Activated CD4-positive, alpha-beta T cell treated with anti-CD3 and anti-CD28 coated beads, Interleukin-2, amount 10 ng/mL, durations not matched to agents 24 days and 14 days (primary cell): ENCODE measurements at regions of chr11 and their contacts with region 1.

Region 1: GRCh38 chr11:70202898-70203748 is at the start of gene FADD:
- DNase-seq: peak; percentile 97
- H3K4me3 Mint-ChIP-seq: peak within 1 kb of the TSS; percentile 93
- H3K27ac Mint-ChIP-seq: peak within 1 kb of the TSS; percentile 96
- H3K4me1 Mint-ChIP-seq: peaks cover 27% of the 10 kb centered on the region
- H3K27me3 Mint-ChIP-seq: peaks cover 2% of the 10 kb centered on the region
- total RNA-seq, gene FADD: 42.9 and 44.4 TPM in 2 replicates

Region 2: DNA sequence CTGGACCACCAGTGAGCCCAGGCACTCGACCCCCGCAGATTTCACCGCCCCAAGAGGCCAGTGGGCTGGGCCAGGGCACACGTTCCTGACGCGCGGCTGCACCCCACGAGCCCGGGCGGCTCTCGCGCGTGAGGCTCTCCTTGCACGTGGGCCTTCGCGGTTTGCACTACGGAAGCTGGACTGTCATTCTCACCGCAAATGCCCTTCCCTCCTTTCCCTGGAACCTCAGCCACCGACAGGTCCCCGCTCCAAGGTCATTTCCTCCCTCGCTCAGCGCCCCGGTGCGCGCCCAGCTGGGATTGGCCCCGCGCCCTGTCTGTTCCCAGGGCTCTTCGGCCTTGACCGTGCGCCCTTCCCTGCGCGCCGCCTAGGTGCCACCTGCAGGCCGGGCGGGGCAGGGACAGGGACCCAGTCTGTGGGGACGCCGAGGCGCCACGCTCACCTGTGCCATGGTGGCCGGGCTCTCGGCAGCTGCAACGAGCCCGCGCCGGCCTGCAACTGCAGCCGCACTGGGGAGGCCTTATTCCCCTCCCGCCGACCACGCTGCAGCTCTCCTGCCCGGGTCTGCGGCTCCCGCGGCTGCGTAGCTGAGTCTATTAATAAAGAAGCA is 1359.3 kb before region 1 on chr11:
- intact Hi-C with region 1: loop called (anchors 5 kb)
- DNase-seq: peak; percentile 90
- H3K4me3 Mint-ChIP-seq: peak overlapping the region; percentile 81
- H3K27ac Mint-ChIP-seq: peak overlapping the region; percentile 81
- H3K4me1 Mint-ChIP-seq: peaks cover 30% of the 10 kb centered on the region
- H3K27me3 Mint-ChIP-seq: peaks cover 15% of the 10 kb centered on the region

Region 3: GRCh38 chr11:69675811-69676371 is 527.2 kb before region 1 on chr11:
- intact Hi-C with region 1: loop called (anchors 1 kb)
- DNase-seq: no peak
- H3K4me3 Mint-ChIP-seq: peak overlapping the region; percentile 96
- H3K27ac Mint-ChIP-seq: peak overlapping the region; percentile 92
- H3K4me1 Mint-ChIP-seq: peaks cover 17% of the 10 kb centered on the region
- H3K27me3 Mint-ChIP-seq: peaks cover 8% of the 10 kb centered on the region

Region 4: DNA sequence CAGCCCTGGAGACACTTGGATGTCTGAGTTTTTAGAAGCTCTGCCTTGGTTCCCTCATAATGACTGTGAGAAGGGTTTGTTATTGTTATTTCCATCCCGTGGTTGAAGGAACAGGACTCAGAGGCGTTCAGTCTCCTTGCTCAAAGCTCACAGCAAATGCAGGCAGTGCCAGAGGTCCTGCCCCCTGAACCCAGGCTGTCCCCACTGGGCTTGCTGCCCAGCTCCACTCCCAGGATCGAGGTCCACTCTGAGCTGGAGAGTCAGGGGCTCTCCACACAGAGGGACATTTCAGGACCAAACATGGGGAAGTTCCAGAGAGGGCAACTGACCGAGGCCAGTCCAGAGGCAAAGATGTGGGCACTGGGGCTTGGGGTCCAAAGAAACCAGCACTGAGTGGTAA is 442.8 kb before region 1 on chr11:
- intact Hi-C with region 1: no loop called
- DNase-seq: no peak
- H3K4me3 Mint-ChIP-seq: no peak overlapping the region
- H3K27ac Mint-ChIP-seq: no peak overlapping the region
- H3K4me1 Mint-ChIP-seq: no peaks in the 10 kb centered on the region
- H3K27me3 Mint-ChIP-seq: no peaks in the 10 kb centered on the region

Region 5: DNA sequence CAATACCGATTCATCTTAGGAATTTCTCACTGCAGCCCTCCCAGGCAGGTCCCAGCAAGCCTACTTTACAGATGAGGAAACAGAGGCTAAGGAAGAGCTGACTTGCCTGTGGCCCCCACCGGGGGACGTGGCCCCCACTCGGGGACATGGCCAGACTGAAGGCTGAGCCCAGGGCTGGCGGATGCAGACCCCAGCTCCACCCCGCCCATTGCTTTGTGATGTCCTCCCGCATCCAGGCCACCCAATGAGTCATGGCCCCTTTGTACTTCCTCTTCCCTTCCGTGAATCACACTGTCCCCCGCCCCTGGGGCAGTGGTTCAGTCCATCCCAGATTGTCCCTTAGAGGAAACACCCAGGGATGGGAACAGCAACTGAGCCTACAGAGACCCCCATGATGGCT is 241.0 kb before region 1 on chr11:
- intact Hi-C with region 1: no loop called
- DNase-seq: no peak
- H3K4me3 Mint-ChIP-seq: no peak overlapping the region
- H3K27ac Mint-ChIP-seq: no peak overlapping the region
- H3K4me1 Mint-ChIP-seq: no peaks in the 10 kb centered on the region
- H3K27me3 Mint-ChIP-seq: no peaks in the 10 kb centered on the region

Region 6: GRCh38 chr11:70040452-70040851 is 162.7 kb before region 1 on chr11:
- intact Hi-C with region 1: no loop called
- DNase-seq: no peak
- H3K4me3 Mint-ChIP-seq: no peak overlapping the region
- H3K27ac Mint-ChIP-seq: no peak overlapping the region
- H3K4me1 Mint-ChIP-seq: no peaks in the 10 kb centered on the region
- H3K27me3 Mint-ChIP-seq: peaks cover 5% of the 10 kb centered on the region

Region 7: GRCh38 chr11:70270104-70270876 is 67.2 kb after region 1 on chr11 and contains the start of gene PPFIA1:
- intact Hi-C with region 1: loop called (anchors 1 kb)
- DNase-seq: peak; percentile 99
- H3K4me3 Mint-ChIP-seq: peak within 1 kb of the TSS; percentile 93
- H3K27ac Mint-ChIP-seq: peak within 1 kb of the TSS; percentile 82
- H3K4me1 Mint-ChIP-seq: peaks cover 21% of the 10 kb centered on the region
- H3K27me3 Mint-ChIP-seq: peaks cover 27% of the 10 kb centered on the region
- total RNA-seq, gene PPFIA1: 45.0 and 54.2 TPM in 2 replicates

Region 8: GRCh38 chr11:70364745-70365543 is 161.8 kb after region 1 on chr11:
- intact Hi-C with region 1: loop called (anchors 2 kb)
- DNase-seq: peak; percentile 91
- H3K4me3 Mint-ChIP-seq: peak overlapping the region; percentile 79
- H3K27ac Mint-ChIP-seq: peak overlapping the region; percentile 97
- H3K4me1 Mint-ChIP-seq: peaks cover 25% of the 10 kb centered on the region
- H3K27me3 Mint-ChIP-seq: no peaks in the 10 kb centered on the region

Region 9: GRCh38 chr11:70397983-70398833 is 195.1 kb after region 1 on chr11 and contains the start of gene CTTN:
- intact Hi-C with region 1: loop called (anchors 10 kb)
- DNase-seq: peak; percentile 88
- H3K4me3 Mint-ChIP-seq: peak within 1 kb of the TSS; percentile 85
- H3K27ac Mint-ChIP-seq: peak within 1 kb of the TSS; percentile 84
- H3K4me1 Mint-ChIP-seq: peaks cover 25% of the 10 kb centered on the region
- H3K27me3 Mint-ChIP-seq: peaks cover 53% of the 10 kb centered on the region
- total RNA-seq, gene CTTN: 56.7 and 57.0 TPM in 2 replicates

Region 10: DNA sequence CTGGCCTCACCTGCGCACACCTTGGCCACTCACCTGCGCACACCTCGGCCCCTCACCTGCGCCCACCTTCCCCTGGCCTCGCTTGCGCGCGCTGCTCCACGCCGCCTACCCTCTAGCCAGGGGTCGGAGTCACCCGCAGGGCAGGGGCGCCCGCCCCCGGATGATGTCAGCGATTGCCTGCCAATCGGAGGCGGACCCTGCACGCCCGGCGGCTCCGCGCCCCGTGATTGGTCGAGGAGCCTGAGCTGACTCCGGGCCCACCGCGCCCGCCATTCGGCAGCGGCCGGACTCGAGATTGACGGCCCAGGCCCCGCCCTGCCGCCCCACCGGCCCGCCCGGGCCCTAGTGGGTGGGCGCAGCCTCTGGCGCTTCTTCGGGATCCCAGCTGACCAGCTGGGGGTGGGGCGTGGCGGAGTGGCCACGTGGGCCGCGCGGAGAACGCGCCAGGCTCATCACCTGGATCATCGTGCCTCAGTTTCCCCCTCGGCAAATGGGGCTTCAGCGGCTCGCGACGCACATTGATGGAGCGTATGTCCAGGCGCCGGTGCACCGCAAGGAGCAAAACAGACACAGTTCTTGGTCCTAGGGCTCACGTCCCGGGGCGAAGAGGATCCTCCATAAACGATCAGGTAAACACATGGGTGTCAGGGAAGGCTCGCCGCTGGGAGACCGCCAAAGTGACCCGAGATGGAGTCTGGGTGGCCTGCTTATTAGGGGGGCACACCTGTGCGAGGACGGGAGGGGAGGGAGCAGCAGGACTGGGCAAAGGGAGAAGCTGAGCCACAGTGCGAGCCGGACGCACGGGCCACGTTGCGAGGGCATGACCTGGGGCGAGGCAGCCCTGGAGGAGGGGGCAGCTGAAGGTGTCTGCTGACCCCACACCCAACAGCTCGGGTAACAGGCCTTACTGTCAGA is 1245.4 kb after region 1 on chr11 and contains the start of gene DHCR7:
- intact Hi-C with region 1: loop called (anchors 5 kb)
- DNase-seq: peak; percentile 99
- H3K4me3 Mint-ChIP-seq: peak within 1 kb of the TSS; percentile 93
- H3K27ac Mint-ChIP-seq: peak within 1 kb of the TSS; percentile 89
- H3K4me1 Mint-ChIP-seq: peaks cover 50% of the 10 kb centered on the region
- H3K27me3 Mint-ChIP-seq: no peaks in the 10 kb centered on the region
- total RNA-seq, gene DHCR7: 112 and 116 TPM in 2 replicates